ENCODE measurements at regions of chr10 and their contacts with region 1.

Region 1: GRCh38 chr10:103580430-103580829 is 86.9 kb downstream of the NEURL1 start:
- DNase-seq: peak; percentile 76 to 92
- ATAC-seq: peak; percentile 94 to 97
- H3K4me3 ChIP-seq: no peak overlapping the region
- H3K27ac ChIP-seq: peak overlapping the region; percentile 86 to 92 (median 89)
- H3K4me1 ChIP-seq: peaks cover 40% of the 10 kb centered on the region in 2 donors
- H3K27me3 ChIP-seq: no peaks in the 10 kb centered on the region
- CTCF ChIP-seq: no peak
- POLR2A ChIP-seq: peak in 1 of 2 donors; percentile 24

Region 2: GRCh38 chr10:103554488-103555324 is 25.7 kb before region 1 on chr10:
- in situ Hi-C with region 1: no loop called
- intact Hi-C with region 1: loop called (anchors 2 kb)
- DNase-seq: peak; percentile 63 to 75
- ATAC-seq: peak; percentile 60 to 67
- H3K4me3 ChIP-seq: peak overlapping the region; percentile 57 to 63 (median 62)
- H3K27ac ChIP-seq: peak overlapping the region; percentile 83 to 94 (median 89)
- H3K4me1 ChIP-seq: peaks cover 41 to 51% of the 10 kb centered on the region in 2 donors
- H3K27me3 ChIP-seq: no peaks in the 10 kb centered on the region
- CTCF ChIP-seq: no peak
- POLR2A ChIP-seq: peak; percentile 58 to 64

Region 3: GRCh38 chr10:103598654-103599115 is 18.3 kb after region 1 on chr10:
- in situ Hi-C with region 1: no loop called
- intact Hi-C with region 1: no loop called
- DNase-seq: peak; percentile 36 to 65
- ATAC-seq: peak; percentile 66 to 91
- H3K4me3 ChIP-seq: no peak overlapping the region
- H3K27ac ChIP-seq: no peak overlapping the region
- H3K4me1 ChIP-seq: peaks cover 11 to 20% of the 10 kb centered on the region in 2 donors
- H3K27me3 ChIP-seq: no peaks in the 10 kb centered on the region
- CTCF ChIP-seq: peak; percentile 64 to 85 (median 81)
- POLR2A ChIP-seq: no peak

Region 4: DNA sequence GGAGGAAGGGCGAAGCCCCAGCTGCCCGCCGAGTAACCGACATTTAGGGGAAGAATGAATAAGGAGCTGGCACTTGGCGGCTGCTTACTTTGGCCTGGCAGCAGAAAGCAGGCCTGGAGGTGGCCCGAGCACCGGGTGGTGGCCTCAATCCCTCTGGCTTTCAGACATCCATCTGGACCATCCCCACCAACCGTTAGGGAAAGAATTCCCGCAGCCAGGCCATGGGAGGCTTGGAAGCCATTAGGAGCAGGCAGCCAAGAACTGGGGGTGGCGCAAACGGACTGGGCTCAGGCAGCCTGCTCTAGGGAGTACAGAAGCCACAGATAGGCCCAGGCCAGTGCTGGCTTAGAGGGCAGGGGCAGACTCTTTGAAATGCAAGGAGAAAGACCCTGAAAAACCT is 45.7 kb after region 1 on chr10:
- in situ Hi-C with region 1: no loop called
- intact Hi-C with region 1: no loop called
- DNase-seq: no peak
- ATAC-seq: no peak
- H3K4me3 ChIP-seq: no peak overlapping the region
- H3K27ac ChIP-seq: no peak overlapping the region
- H3K4me1 ChIP-seq: peaks cover 3 to 4% of the 10 kb centered on the region in 2 donors
- H3K27me3 ChIP-seq: no peaks in the 10 kb centered on the region
- CTCF ChIP-seq: no peak
- POLR2A ChIP-seq: no peak

Region 5: GRCh38 chr10:103709341-103709920 is 129.0 kb after region 1 on chr10:
- in situ Hi-C with region 1: no loop called
- intact Hi-C with region 1: no loop called
- DNase-seq: no peak
- ATAC-seq: no peak
- H3K4me3 ChIP-seq: no peak overlapping the region
- H3K27ac ChIP-seq: no peak overlapping the region
- H3K4me1 ChIP-seq: no peaks in the 10 kb centered on the region
- H3K27me3 ChIP-seq: no peaks in the 10 kb centered on the region
- CTCF ChIP-seq: no peak
- POLR2A ChIP-seq: no peak